Caco-2 (cell line): ENCODE measurements at regions of chr16 and their contacts with region 1.

Region 1: GRCh38 chr16:3029537-3030402 is 5.9 kb downstream of the THOC6 start:
- DNase-seq: no peak
- H3K4me3 ChIP-seq: no peak overlapping the region
- H3K4me3 Mint-ChIP-seq: peak overlapping the region; percentile 12
- H3K27ac Mint-ChIP-seq: peak overlapping the region; percentile 57
- H3K4me1 ChIP-seq: peaks cover 7% of the 10 kb centered on the region
- H3K4me1 Mint-ChIP-seq: peaks cover 7% of the 10 kb centered on the region
- H3K27me3 ChIP-seq: no peaks in the 10 kb centered on the region
- H3K27me3 Mint-ChIP-seq: no peaks in the 10 kb centered on the region
- CTCF ChIP-seq: no peak

Region 2: DNA sequence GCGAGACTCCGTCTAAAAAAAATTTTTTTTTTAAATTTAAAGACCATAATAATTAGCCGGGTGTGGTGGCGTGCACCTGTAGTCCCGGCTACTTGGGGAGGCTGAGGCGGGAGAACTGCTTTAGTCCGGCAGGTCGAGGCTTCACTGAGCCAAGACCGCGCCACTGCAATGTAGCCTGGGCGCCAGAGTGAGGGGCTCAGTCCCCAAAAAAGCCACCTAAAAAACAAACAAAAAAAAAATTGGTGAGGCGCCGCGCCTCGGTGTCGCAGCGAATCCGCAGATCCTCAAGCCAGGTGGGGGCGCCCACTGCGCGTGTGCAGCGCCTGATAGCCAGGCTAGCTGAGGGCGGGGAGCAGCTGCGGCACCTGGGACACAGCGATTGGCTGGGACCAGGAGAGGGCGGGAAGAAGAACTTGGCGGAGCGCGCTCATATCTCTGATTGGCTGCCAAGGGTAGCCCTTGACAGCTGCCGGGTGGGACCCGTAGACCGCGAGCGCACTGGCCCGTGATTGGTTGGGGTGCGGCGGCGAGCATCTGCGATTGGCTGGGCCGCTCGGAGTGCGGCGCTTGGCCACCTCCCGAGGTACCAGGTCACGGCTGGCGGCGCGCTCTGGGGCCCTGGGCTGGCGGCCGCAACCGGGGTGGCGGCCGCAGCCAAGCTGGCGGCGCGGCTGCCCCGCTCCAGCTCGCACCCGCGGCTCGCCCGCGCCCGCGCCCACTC is 26.0 kb before region 1 on chr16:
- CTCF ChIA-PET with region 1: interaction called, 113 read pairs
- POLR2A ChIA-PET with region 1: interaction called, 15 read pairs
- intact Hi-C with region 1: loop called (anchors 1 kb)
- DNase-seq: peak; percentile 98 to 99
- H3K4me3 ChIP-seq: peak overlapping the region; percentile 52
- H3K4me3 Mint-ChIP-seq: peak overlapping the region; percentile 89
- H3K27ac Mint-ChIP-seq: no peak overlapping the region
- H3K4me1 ChIP-seq: peaks cover 35% of the 10 kb centered on the region
- H3K4me1 Mint-ChIP-seq: peaks cover 18% of the 10 kb centered on the region
- H3K27me3 ChIP-seq: no peaks in the 10 kb centered on the region
- H3K27me3 Mint-ChIP-seq: no peaks in the 10 kb centered on the region
- CTCF ChIP-seq: peak; percentile 42 to 80

Region 3: DNA sequence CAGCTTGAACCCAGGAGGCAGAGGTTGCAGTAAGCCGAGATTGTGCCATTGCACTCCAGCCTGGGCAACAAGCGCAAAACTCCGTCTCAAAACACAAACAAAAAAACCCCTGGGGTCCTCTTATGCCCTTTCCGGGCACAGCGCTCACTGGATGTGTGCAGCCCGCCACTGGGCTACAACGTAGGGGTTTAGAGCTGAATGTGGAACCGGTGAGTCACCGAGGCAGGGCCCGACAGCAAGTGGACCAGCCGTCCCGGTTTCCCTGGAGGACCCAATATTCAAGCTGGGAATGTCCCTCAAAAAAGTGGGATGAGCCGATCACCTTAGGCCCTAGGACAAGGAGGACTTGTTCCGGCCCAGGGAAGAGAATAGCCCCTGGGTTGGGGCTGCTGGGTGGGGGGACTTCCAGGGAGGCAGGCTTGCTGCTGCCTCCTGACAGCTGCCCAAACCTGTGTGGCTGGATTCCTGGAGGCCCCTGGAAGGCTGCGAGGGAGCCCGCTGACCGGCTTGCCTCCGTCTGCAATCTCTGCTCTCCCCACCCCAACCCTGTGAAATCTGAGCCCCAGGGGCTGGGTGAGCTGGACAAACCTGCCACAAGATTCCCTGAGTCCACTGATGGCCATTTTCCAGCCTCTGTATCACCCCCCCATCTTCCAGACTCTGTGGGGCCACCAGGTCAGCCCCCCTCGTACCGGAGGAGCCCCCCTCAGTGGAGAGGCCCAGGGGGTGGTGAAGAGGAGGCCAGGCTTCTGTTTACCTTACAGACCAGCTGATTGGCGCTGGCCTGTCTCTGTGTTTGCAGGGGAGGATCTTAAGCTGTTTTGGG is 20.0 kb before region 1 on chr16:
- CTCF ChIA-PET with region 1: interaction called, 113 read pairs
- POLR2A ChIA-PET with region 1: interaction called, 6 read pairs
- intact Hi-C with region 1: no loop called
- DNase-seq: peak; percentile 96 to 97
- H3K4me3 ChIP-seq: no peak overlapping the region
- H3K4me3 Mint-ChIP-seq: peak overlapping the region; percentile 45
- H3K27ac Mint-ChIP-seq: peak overlapping the region; percentile 94
- H3K4me1 ChIP-seq: peaks cover 77% of the 10 kb centered on the region
- H3K4me1 Mint-ChIP-seq: peaks cover 27% of the 10 kb centered on the region
- H3K27me3 ChIP-seq: no peaks in the 10 kb centered on the region
- H3K27me3 Mint-ChIP-seq: no peaks in the 10 kb centered on the region
- CTCF ChIP-seq: no peak

Region 4: DNA sequence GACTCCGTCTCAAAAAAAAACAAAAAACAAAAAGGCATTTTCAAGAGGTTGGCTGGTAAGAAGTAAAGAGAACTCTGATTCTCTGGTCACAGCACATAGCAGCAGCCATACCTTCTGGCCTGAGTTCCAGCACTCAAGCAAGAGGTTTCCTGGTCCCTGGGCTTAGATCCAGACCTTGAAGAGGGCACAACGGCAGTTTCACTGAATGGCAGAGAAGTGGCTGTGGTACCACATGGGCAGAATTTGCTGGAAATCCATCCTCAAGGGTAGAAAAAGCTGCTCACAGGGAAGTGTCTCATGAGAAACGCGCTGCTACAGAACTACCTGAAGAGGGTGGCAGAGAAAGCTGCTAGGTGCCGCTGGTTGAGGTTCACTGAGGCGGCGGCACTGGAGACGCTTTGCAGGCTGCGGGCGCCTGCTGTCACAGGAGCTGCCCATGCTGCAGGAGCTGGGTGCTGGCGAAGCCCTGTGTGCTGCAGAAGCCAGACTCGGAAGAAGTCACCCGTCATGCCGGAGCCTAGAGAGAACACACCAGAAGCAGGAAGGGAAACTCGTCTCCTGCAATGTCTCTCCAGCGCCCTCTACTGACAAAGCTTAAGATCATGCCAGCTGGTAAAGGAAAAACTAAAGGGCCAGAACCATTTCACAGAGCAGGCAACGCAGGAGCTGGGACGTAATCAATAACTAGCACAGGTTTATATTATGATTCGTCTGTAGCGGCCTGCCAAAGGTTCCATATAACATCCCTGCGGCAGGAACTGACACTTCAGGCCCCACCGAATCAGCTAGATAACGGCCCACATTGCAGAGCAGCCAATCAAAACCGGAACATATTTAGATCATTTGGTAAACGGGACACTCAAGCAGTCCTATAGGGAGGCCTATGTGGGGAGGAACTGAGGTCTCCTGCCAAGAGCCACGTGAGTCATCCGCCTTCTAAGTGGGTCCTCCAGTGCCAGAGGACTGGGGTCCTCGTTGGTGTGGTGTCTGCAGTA is 99.7 kb after region 1 on chr16:
- CTCF ChIA-PET with region 1: interaction called, 14 read pairs
- POLR2A ChIA-PET with region 1: no interaction called
- intact Hi-C with region 1: no loop called
- DNase-seq: peak; percentile 74 to 81
- H3K4me3 ChIP-seq: peak overlapping the region; percentile 36
- H3K4me3 Mint-ChIP-seq: peak overlapping the region; percentile 81
- H3K27ac Mint-ChIP-seq: peak overlapping the region; percentile 25
- H3K4me1 ChIP-seq: no peaks in the 10 kb centered on the region
- H3K4me1 Mint-ChIP-seq: peaks cover 15% of the 10 kb centered on the region
- H3K27me3 ChIP-seq: no peaks in the 10 kb centered on the region
- H3K27me3 Mint-ChIP-seq: no peaks in the 10 kb centered on the region
- CTCF ChIP-seq: peak; percentile 72 to 84